Activated CD4-positive, alpha-beta memory T cell treated with anti-CD3 and anti-CD28 coated beads for 36 hours (primary cell): ENCODE measurements at regions of chr9 and their contacts with region 1.

Region 1: GRCh38 chr9:136790927-136791641 is at the start of gene TMEM141:
- DNase-seq: peak; percentile 100
- H3K4me3 Mint-ChIP-seq: peak within 1 kb of the TSS; percentile 81
- H3K27ac Mint-ChIP-seq: peak within 1 kb of the TSS; percentile 79
- H3K4me1 Mint-ChIP-seq: peaks cover 21% of the 10 kb centered on the region
- H3K27me3 Mint-ChIP-seq: peaks cover 1% of the 10 kb centered on the region
- total RNA-seq, gene TMEM141: 42.3 to 45.2 TPM

Region 2: GRCh38 chr9:136539427-136540421 is 251.4 kb before region 1 on chr9:
- CTCF ChIA-PET with region 1: no interaction called
- POLR2A ChIA-PET with region 1: no interaction called
- intact Hi-C with region 1: loop called (anchors 2 kb)
- DNase-seq: peak; percentile 99
- H3K4me3 Mint-ChIP-seq: peak overlapping the region; percentile 78
- H3K27ac Mint-ChIP-seq: peak overlapping the region; percentile 99
- H3K4me1 Mint-ChIP-seq: peaks cover 73% of the 10 kb centered on the region
- H3K27me3 Mint-ChIP-seq: no peaks in the 10 kb centered on the region

Region 3: DNA sequence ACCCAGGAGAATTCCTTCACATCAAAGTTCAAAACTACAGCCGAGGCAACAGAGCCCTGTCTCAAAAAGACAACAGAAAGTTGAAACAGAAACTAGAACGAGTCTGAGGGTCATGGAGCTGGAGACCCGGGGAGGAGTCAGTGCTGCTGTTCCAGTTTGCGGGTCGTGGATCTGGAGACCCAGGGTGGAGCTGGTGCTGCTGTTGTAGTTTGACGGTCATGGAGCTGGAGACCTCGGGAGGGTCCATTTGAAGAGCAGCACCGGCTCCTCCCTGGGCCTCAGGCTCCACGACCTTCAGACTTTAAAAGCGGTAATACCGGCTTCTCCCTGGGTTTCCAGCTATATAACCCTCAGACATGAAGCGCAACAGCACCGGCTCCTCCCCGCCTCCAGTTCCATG is 13.7 kb before region 1 on chr9:
- CTCF ChIA-PET with region 1: interaction called, 11 read pairs
- POLR2A ChIA-PET with region 1: no interaction called
- intact Hi-C with region 1: no loop called
- DNase-seq: no peak
- H3K4me3 Mint-ChIP-seq: no peak overlapping the region
- H3K27ac Mint-ChIP-seq: no peak overlapping the region
- H3K4me1 Mint-ChIP-seq: no peaks in the 10 kb centered on the region
- H3K27me3 Mint-ChIP-seq: peaks cover 12% of the 10 kb centered on the region

Region 4: GRCh38 chr9:136885950-136886578 is 95.0 kb after region 1 on chr9 and contains the start of gene TRAF2:
- CTCF ChIA-PET with region 1: no interaction called
- POLR2A ChIA-PET with region 1: no interaction called
- intact Hi-C with region 1: loop called (anchors 1 kb)
- DNase-seq: peak; percentile 99
- H3K4me3 Mint-ChIP-seq: peak within 1 kb of the TSS; percentile 91
- H3K27ac Mint-ChIP-seq: peak within 1 kb of the TSS; percentile 89
- H3K4me1 Mint-ChIP-seq: peaks cover 39% of the 10 kb centered on the region
- H3K27me3 Mint-ChIP-seq: no peaks in the 10 kb centered on the region
- total RNA-seq, gene TRAF2: 40.0 to 41.4 TPM

Region 5: DNA sequence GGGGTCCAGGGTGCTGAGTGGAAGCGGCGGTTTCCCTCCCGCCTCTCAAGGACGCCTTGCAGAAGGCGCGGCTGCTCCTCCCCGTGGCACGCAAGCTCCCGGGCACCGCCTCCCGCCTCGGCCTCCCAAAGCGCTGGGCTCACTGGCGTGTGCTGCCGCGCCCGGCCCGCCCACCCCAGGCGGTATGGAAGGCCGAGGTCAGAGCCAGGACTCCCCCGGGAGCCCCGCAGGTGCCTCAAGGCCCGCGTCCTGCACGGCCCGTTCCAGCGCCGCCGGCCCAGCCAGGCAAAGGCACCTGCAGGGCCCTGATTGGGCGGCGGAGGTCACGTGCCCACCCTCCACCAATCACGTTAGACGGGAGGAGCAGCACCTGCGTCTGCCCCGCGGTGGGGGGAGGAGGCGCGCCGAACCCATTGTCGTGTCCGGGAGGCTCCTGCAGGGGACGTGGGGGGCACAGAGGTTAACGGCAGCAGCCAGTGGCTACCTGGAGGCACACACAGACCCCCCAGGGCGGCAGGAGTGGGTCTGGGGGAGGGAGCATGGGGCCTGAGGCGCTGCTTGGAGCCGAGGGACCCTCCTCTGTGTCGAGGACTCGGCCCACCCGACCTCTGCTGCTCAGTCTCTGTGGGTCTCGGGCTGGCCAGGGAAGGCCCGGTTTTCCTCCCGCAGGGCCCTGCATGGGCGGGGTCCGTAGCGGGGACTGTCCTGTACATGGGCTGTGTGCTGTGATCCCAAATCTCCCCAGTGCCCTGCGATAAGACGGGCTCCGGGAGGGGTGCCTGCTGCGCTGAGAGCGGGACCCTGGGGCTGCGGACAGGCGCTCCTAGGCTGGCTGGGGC is 159.0 kb after region 1 on chr9:
- CTCF ChIA-PET with region 1: no interaction called
- POLR2A ChIA-PET with region 1: no interaction called
- intact Hi-C with region 1: loop called (anchors 2 kb)
- DNase-seq: peak; percentile 98
- H3K4me3 Mint-ChIP-seq: peak overlapping the region; percentile 78
- H3K27ac Mint-ChIP-seq: peak overlapping the region; percentile 76
- H3K4me1 Mint-ChIP-seq: peaks cover under 1% of the 10 kb centered on the region
- H3K27me3 Mint-ChIP-seq: no peaks in the 10 kb centered on the region

Region 6: GRCh38 chr9:137086531-137087408 is 295.7 kb after region 1 on chr9 and contains the start of gene MAN1B1:
- CTCF ChIA-PET with region 1: no interaction called
- POLR2A ChIA-PET with region 1: no interaction called
- intact Hi-C with region 1: no loop called
- DNase-seq: peak; percentile 100
- H3K4me3 Mint-ChIP-seq: peak within 1 kb of the TSS; percentile 88
- H3K27ac Mint-ChIP-seq: peak within 1 kb of the TSS; percentile 92
- H3K4me1 Mint-ChIP-seq: peaks cover 40% of the 10 kb centered on the region
- H3K27me3 Mint-ChIP-seq: no peaks in the 10 kb centered on the region
- total RNA-seq, gene MAN1B1: 32.9 to 33.1 TPM

Region 7: DNA sequence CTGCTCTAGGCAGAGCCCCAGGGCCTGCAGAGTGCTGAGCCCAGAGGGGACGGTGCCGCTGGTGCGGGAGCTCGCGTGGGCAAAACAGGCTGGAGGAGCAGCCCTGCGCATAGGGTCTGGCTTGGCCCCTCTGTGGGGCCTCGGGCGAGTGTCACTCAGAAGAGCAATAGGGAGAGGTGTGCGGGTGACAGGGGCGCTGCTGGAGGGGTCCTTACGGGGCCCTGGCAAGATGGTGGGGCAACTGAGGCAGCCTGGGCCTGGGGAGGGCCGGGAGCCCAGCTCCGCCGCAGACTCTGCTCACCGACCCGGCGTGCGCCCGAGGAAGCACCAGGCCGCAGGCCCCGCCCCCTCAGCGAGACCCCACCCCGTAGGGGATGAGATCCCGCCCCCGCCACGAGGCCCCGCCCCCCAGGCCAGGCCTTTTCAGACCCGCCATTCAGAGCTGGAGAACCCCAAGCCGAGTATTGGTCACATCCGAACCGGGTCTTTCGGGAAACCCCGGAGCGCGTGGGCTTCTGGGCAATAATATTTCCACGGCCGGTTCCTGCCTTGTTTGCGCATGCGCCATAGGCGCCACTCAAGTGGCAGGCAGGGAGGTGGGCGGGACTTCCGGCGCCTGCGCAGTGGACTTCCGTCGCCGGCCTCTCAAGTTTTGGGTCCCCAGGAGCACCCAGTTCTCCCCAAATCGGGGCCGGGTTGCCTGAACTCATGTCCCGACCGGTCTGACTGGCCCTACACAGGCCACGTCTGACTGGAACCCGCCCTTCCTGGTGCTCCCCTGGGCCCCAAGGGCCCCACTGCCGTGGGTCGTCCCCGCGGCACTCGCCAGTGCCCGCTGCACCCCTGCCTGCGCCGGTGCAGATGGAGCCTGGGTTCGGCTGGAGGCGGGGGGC is 432.2 kb after region 1 on chr9:
- CTCF ChIA-PET with region 1: no interaction called
- POLR2A ChIA-PET with region 1: no interaction called
- intact Hi-C with region 1: loop called (anchors 5 kb)
- DNase-seq: peak; percentile 99
- H3K4me3 Mint-ChIP-seq: peak overlapping the region; percentile 73
- H3K27ac Mint-ChIP-seq: peak overlapping the region; percentile 58
- H3K4me1 Mint-ChIP-seq: peaks cover 5% of the 10 kb centered on the region
- H3K27me3 Mint-ChIP-seq: peaks cover 2% of the 10 kb centered on the region